Activated T-helper 1 cell treated with anti-CD3 and anti-CD28 coated beads, Interleukin-12 subunit alpha, Interleukin-12 subunit beta, Interleukin-2, Interleukin-4 antibody, amounts not matched to agents 30 ng/mL and 10 ng/mL and 1 ng/mL, durations not matched to agents 14 hours and 24 hours and 36 hours (primary cell): ENCODE measurements at regions of chr20 and their contacts with region 1.

Region 1: DNA sequence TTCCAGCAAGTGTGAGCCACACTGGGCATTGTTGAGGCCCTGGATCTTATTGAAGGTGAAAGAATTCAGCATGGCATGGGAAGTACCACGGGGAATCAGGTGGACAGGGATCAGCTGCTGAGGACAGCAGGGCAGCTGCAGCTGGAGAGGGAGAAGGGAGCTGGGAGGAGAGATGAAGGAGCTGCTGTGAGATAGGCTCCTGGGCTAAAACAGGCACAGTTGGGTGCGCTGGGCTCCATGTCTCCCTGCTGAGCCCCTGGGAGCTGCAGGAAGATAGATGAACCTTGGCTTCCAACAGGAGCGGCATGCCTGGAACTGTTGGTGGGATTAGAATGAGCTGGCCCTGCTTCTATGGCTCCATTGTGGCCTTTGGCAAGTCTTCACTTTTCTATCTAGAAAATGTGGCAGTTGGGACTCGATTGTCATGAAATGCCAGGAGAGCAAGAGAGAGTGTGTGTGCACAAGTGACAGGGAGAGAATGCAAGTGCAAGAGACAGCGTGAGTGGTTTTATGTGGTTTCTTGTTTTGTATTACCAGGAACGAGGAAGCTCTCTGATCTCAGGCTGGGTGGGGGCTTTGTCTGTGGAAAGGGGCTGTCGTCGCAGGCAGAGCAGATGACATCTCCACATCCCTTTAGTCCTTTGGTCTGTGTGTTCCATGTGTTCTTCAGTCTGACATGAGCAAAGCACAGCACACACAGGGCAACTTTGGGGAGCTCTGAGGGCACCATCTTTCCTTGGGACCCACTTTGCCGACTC is 20.4 kb downstream of the SNPH start:
- DNase-seq: no peak
- H3K4me3 Mint-ChIP-seq: peak overlapping the region; percentile 20
- H3K27ac Mint-ChIP-seq: peak overlapping the region; percentile 25
- H3K4me1 Mint-ChIP-seq: peaks cover 18% of the 10 kb centered on the region
- H3K27me3 Mint-ChIP-seq: no peaks in the 10 kb centered on the region

Region 2: GRCh38 chr20:1266167-1266973 is 20.1 kb before region 1 on chr20 and contains the start of gene SNPH:
- intact Hi-C with region 1: loop called (anchors 1 kb)
- DNase-seq: peak; percentile 63
- H3K4me3 Mint-ChIP-seq: peak within 1 kb of the TSS; percentile 89
- H3K27ac Mint-ChIP-seq: peak within 1 kb of the TSS; percentile 87
- H3K4me1 Mint-ChIP-seq: peaks cover 32% of the 10 kb centered on the region
- H3K27me3 Mint-ChIP-seq: peaks cover 3% of the 10 kb centered on the region
- total RNA-seq, gene SNPH: 2.1 and 2.5 TPM in 2 replicates

Region 3: DNA sequence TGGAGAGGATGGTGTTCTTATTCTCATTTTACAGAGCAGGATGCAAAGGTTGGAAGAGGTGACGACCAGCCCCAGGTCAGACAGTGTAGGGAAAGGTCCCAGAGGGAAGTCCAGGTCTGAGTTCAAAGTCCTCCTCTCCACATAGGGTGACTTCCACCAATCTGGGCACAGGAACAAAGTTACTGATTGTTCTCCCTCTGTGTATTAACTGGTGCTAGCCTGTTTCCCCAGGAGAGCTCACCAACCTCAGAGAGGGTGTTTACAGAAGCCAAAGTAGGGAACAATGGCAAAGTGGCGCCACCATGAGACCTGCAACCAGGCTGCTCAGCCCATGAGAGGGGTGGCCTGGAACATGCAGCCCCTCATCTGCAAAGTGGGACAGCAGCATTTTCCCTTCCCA is 350.2 kb after region 1 on chr20:
- intact Hi-C with region 1: no loop called
- DNase-seq: no peak
- H3K4me3 Mint-ChIP-seq: no peak overlapping the region
- H3K27ac Mint-ChIP-seq: peak overlapping the region; percentile 13
- H3K4me1 Mint-ChIP-seq: peaks cover 37% of the 10 kb centered on the region
- H3K27me3 Mint-ChIP-seq: no peaks in the 10 kb centered on the region